ENCODE measurements at regions of chr20 and their contacts with region 1.

Region 1: GRCh38 chr20:354298-355064 is 7.6 kb downstream of the NRSN2 start:
- DNase-seq: peak; percentile 86
- H3K27ac ChIP-seq: peak overlapping the region; percentile 51
- CTCF ChIP-seq: peak; percentile 97

Region 2: DNA sequence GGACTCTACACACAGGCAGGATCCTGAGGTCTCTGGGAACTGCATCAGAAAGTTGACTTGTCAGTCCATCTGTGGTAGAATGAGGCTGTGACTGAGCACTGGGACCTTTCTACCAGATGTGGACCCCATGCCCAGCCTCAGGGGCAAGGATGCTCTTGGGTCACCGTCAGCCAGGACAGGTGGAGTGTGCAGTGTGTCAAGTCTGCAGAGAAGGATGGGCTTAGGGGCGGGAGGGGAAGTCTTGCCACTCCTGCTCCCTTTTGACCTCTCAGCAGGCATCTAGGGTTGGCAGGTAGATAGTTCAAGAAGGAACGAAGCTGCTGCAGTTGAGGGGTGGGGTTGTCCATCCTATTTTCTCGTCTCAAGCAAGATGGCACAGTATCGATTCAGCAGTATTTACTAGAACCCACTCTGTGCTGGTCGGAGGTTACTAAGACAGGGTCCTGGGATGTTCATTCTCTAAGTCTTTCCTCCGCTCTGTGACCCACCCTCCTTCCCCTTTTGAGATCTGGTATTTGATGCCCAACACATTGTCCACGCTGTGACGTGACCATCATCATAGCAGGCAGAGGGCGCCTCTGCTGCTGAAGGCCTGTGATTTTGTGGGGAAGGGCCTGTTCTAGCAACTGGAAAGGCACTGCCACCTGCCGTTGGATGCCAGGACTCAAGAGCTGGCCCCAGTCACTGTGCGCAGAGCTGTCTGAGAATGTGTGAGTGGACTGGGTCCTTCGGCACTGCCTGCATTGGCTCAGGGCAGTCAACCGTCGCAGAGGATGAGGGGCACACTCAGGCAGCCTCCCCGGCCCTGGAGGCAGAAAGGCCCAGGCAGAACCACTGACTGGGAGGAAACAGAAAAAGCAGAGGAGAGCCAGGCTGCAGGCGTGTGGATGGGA is 76.8 kb after region 1 on chr20:
- CTCF ChIA-PET with region 1: interaction called, 13 read pairs
- POLR2A ChIA-PET with region 1: no interaction called
- DNase-seq: peak; percentile 78
- H3K27ac ChIP-seq: peak overlapping the region; percentile 66
- CTCF ChIP-seq: peak; percentile 90

Region 3: GRCh38 chr20:543369-544152 is 189.1 kb after region 1 on chr20 and contains the start of gene CSNK2A1:
- CTCF ChIA-PET with region 1: no interaction called
- POLR2A ChIA-PET with region 1: interaction called, 10 read pairs
- DNase-seq: peak; percentile 98
- H3K27ac ChIP-seq: peak within 1 kb of the TSS; percentile 79
- CTCF ChIP-seq: no peak

Measured in RWPE1 (cell line).